Heart left ventricle (tissue), 16 donors: ENCODE measurements at regions of chr7 and their contacts with region 1.

Region 1: DNA sequence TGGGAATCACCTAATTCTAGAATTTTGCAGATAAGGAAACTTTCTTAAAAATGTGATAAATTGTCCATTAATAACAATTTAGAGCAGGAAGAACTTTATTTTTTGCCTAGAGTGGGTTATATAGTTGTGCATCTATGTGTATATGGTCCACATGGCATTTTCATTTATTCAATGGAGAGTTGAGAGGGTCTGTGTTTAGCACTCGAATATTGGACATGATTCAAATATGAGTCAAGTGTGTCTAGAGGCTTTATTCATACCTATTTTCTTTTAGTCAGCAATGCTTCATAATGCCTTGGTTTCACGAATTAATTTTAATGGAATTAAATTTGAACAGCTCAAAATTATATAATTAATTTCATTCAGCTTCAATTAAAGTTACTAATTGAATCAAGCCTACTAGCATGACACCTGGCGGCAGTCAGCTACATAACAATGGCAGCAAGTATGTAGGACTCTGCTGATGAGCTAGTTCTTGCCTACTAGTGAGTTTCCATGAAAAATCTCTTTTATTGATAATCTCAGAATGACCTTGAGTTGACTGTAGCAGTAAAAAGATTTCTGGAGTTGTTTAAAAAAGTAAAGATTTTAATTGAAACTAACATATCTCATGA is 17.7 kb downstream of the MDFIC start:
- DNase-seq: no peak
- ATAC-seq: no peak
- H3K4me3 ChIP-seq: no peak overlapping the region
- H3K27ac ChIP-seq: peak overlapping the region in 1 of 12 donors; percentile 16
- H3K4me1 ChIP-seq: peaks cover 0 to 90% (median 22%) of the 10 kb centered on the region in 12 donors
- H3K27me3 ChIP-seq: no peaks in the 10 kb centered on the region
- CTCF ChIP-seq: no peak
- POLR2A ChIP-seq: no peak

Region 2: GRCh38 chr7:114973147-114973546 is 33.6 kb after region 1 on chr7:
- intact Hi-C with region 1: loop called in 1 of 10 experiments (anchors 5 kb)
- DNase-seq: no peak
- ATAC-seq: no peak
- H3K4me3 ChIP-seq: no peak overlapping the region
- H3K27ac ChIP-seq: peak overlapping the region in 2 of 12 donors; percentile 6 to 22
- H3K4me1 ChIP-seq: peaks cover 0 to 63% (median 23%) of the 10 kb centered on the region in 12 donors
- H3K27me3 ChIP-seq: no peaks in the 10 kb centered on the region
- CTCF ChIP-seq: no peak
- POLR2A ChIP-seq: no peak